Common myeloid progenitor, CD34-positive (primary cell): ENCODE measurements at regions of chr11 and their contacts with region 1.

Region 1: DNA sequence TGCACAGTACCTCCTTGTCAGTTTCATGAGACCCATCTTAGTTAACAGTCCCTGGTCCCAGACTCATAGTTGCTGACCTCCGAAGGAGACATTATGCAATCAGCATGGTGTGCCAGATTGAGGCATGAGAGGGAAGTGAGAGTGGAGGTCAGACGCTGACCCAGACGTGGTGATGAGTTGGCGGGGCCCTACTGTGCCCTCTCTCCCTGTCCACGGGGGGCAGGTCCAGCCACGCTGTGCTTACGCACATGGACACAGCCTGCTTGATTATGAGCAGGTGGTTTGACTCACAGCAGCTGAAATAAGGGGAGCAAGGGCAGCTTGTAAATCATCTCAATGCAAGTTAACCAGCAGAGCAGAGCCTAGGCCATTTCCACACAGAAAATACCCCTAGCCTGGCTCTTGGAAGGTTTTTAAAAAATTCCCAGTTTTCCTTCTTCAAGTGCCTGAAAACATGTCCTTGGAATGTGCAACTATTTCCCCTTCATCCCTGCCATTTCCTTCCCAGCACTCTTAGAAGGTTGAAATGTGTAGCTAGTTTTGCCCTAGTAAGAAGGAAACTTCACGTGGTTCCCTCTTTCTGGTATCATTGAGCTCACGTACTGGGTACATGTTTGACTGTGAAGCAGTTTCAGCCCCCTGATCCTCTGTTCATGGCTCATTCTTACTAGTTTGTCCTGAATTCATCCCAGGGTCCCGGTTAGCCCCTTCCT is 122.6 kb upstream of the SORL1-AS1 start:
- DNase-seq: no peak
- H3K4me3 ChIP-seq: no peak overlapping the region
- H3K27ac ChIP-seq: no peak overlapping the region
- H3K4me1 ChIP-seq: peaks cover 21 to 76% (median 38%) of the 10 kb centered on the region in 4 experiments
- H3K27me3 ChIP-seq: no peaks in the 10 kb centered on the region

Region 2: GRCh38 chr11:121561240-121561639 is 14.2 kb before region 1 on chr11:
- CTCF ChIA-PET with region 1: interaction called, 10 read pairs
- POLR2A ChIA-PET with region 1: interaction called, 3 read pairs
- DNase-seq: no peak
- H3K4me3 ChIP-seq: no peak overlapping the region
- H3K27ac ChIP-seq: no peak overlapping the region
- H3K4me1 ChIP-seq: peaks cover 4 to 19% (median 16%) of the 10 kb centered on the region in 4 experiments
- H3K27me3 ChIP-seq: no peaks in the 10 kb centered on the region

Region 3: DNA sequence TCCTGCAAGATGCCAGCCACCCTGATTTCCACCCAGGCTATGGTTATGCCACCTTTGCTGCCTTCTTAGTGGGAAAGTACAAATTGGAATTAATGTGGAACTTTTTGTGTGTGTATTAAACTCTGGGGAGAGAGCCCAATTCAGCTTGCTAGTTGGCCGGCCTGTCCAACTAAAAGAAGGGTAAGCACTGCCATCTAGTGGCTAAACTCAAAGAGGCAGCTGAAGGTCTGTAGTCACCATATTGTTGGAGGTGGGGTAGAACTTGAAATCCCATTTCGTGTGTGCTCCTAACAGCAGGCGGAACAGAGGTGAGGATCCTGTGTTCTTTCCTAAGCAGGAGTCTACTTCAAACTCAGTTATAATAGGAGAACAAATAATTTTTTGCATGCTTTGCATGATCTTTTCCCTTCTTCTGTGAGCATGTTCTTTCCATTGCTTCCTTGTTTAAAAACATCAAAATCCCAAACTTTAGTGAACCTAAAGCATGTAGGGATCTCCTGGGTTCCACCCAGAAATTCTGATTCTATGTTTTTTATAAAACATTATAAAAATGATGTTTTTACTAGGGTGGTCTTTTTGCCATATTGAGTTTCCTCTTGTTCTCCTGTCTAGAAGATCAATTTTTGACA is 16.1 kb after region 1 on chr11:
- CTCF ChIA-PET with region 1: interaction called, 17 read pairs
- POLR2A ChIA-PET with region 1: interaction called, 5 read pairs
- DNase-seq: peak; percentile 83 to 90 (median 85)
- H3K4me3 ChIP-seq: peak overlapping the region in 5 of 7 experiments; percentile 51 to 68 (median 63)
- H3K27ac ChIP-seq: peak overlapping the region in 1 of 2 experiments; percentile 84
- H3K4me1 ChIP-seq: peaks cover 26 to 69% (median 53%) of the 10 kb centered on the region in 4 experiments
- H3K27me3 ChIP-seq: no peaks in the 10 kb centered on the region

Region 4: DNA sequence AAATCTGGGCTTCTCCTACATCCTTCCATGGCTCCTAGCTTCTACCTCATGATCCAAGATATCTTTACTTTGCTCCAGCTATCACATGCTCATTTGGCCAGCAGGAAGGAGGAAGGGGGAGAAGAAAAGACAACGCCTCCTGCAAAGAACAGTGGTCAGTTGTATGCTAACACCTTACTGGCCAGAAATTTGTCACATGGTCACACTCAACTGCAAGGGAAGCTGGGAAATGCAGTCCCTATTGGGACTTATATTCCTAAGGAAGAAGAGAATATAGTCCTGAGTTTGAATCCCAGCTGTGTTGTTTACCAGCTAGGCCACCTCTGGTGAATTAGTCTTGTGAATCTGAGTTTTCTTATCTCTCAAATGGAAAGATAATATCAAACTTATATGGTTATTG is 268.6 kb after region 1 on chr11:
- CTCF ChIA-PET with region 1: no interaction called
- POLR2A ChIA-PET with region 1: no interaction called
- DNase-seq: no peak
- H3K4me3 ChIP-seq: no peak overlapping the region
- H3K27ac ChIP-seq: no peak overlapping the region
- H3K4me1 ChIP-seq: no peaks in the 10 kb centered on the region
- H3K27me3 ChIP-seq: no peaks in the 10 kb centered on the region